Activated naive CD8-positive, alpha-beta T cell treated with anti-CD3 and anti-CD28 coated beads, Interleukin-2, amount 10 ng/mL, durations not matched to agents 7 days and 5 days (primary cell): ENCODE measurements at regions of chr10 and their contacts with region 1.

Region 1: DNA sequence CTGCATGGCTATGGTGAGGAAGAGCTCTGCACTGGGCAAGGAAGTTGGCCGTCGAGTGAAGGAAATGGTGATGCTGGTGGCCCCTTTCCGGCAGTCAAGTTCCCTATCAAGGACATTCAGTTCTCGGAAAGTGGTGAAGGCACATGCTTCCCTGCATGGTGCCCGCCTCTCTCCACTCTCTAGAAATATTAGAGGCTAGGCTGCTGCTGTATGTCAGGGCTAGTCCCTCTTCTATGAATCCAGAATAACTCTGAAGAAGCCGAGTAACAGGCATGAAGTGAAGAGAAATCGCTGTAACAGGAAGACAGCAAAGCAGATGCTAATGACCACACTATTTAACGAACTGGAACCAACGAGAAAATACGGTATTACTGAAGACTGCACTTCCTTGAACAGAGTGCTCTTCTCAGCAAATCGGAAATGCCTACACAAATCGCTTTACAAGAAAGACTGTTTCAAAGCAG is 5.4 kb downstream of the IDI1 start:
- DNase-seq: no peak
- ATAC-seq: peak; percentile 55
- H3K4me3 Mint-ChIP-seq: peak overlapping the region; percentile 79
- H3K27ac Mint-ChIP-seq: peak overlapping the region; percentile 91
- H3K4me1 Mint-ChIP-seq: peaks cover 42% of the 10 kb centered on the region
- H3K27me3 Mint-ChIP-seq: no peaks in the 10 kb centered on the region

Region 2: DNA sequence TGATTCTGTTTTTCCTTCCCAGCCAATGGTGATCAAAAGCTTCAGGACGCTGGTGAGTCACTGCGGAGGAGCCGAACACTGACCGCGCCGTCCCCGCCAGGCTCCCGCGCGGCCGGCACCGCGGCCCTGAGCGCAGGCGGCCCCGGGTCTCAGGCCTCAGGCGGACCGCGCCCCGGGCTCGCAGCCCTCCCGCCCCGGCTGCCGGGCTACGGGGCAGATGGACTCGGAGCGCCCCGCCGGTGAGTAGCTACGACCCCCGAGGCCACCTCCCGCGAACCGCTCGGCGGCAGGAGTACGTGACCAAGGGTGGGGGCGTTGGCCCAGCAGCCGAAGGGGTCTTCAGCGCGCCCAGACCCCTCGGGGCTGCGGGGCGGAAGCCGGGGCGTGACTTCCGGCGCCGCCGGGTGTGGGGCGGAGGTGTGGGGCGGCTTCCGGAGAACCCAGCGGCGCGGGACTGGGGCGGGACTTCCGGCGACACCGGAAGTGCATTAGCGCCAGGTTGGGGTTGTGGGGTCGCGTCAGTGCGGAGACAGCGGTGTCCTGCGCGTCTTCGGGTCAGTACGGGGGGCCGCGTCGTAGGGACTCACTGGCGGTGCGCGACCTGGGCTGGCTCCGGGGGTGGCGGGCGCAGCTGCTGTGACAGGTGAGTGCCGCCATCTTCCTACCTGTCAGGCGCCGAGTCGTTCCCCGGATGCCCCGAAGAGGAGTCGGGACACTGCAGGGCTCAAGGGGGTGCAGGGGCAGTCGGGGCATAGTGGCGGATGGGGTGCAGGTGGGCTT is 13.0 kb after region 1 on chr10 and contains the start of gene WDR37:
- POLR2A ChIA-PET with region 1: interaction called, 15 read pairs
- DNase-seq: peak; percentile 93
- ATAC-seq: peak; percentile 89
- H3K4me3 Mint-ChIP-seq: peak within 1 kb of the TSS; percentile 98
- H3K27ac Mint-ChIP-seq: peak within 1 kb of the TSS; percentile 95
- H3K4me1 Mint-ChIP-seq: peaks cover 58% of the 10 kb centered on the region
- H3K27me3 Mint-ChIP-seq: no peaks in the 10 kb centered on the region
- total RNA-seq, gene WDR37: 30.4 to 34.4 TPM